CD14-positive monocyte (primary cell): ENCODE measurements at regions of chr13 and their contacts with region 1.

Region 1: GRCh38 chr13:98476538-98476966 is 100.4 kb downstream of the STK24 start:
- DNase-seq: peak; percentile 92 to 99 (median 97)
- H3K4me3 ChIP-seq: no peak overlapping the region
- H3K4me3 Mint-ChIP-seq: peak overlapping the region; percentile 56 to 60
- H3K27ac ChIP-seq: peak overlapping the region; percentile 8 to 72
- H3K27ac Mint-ChIP-seq: peak overlapping the region; percentile 39 to 92 (median 86)
- H3K4me1 ChIP-seq: peaks cover 20 to 23% of the 10 kb centered on the region in 2 donors
- H3K4me1 Mint-ChIP-seq: peaks cover 34% of the 10 kb centered on the region
- H3K27me3 ChIP-seq: no peaks in the 10 kb centered on the region
- H3K27me3 Mint-ChIP-seq: peaks cover 0 to 3% (median 1%) of the 10 kb centered on the region in 3 donors
- CTCF ChIP-seq: no peak

Region 2: DNA sequence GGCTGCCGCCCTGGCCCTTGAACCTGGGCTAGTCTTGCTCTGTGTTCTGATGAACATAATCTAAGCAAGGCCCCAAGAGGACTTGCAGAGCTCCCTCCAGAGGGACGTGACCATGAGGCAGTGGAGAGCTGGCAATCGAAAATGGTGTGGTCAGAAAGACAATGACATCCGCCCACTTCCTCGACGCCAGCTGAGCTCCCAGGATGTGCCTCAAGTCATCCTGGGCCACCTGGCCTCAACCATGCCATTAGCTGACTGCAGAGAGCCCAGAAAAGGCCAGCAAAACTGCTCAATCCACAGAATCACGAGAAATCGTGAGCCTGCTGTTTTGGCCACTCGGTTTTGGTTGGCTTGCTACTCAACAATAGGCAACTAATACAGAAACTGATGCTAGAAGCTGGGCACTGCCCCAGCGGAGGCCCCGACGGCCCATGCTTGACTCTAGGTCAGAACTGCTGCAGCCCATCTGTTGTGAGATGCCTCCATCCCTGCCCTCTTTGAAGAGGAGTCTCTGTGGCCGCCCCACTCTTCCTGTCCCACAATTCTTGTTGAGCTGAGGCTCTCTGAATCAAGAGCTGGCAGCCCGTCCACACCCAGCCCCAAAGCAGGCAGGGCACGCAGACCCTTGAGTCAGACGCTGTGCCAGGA is 47.0 kb after region 1 on chr13:
- intact Hi-C with region 1: loop called in 1 of 2 experiments (anchors 5 kb)
- DNase-seq: no peak
- H3K4me3 ChIP-seq: no peak overlapping the region
- H3K4me3 Mint-ChIP-seq: peak overlapping the region in 1 of 2 donors; percentile 12
- H3K27ac ChIP-seq: peak overlapping the region in 1 of 2 donors; percentile 41
- H3K27ac Mint-ChIP-seq: peak overlapping the region in 4 of 7 donors; percentile 6 to 80 (median 60)
- H3K4me1 ChIP-seq: peaks cover 8 to 16% of the 10 kb centered on the region in 2 donors
- H3K4me1 Mint-ChIP-seq: peaks cover 56% of the 10 kb centered on the region
- H3K27me3 ChIP-seq: no peaks in the 10 kb centered on the region
- H3K27me3 Mint-ChIP-seq: peaks cover 0 to 3% (median 0%) of the 10 kb centered on the region in 3 donors
- CTCF ChIP-seq: no peak

Region 3: DNA sequence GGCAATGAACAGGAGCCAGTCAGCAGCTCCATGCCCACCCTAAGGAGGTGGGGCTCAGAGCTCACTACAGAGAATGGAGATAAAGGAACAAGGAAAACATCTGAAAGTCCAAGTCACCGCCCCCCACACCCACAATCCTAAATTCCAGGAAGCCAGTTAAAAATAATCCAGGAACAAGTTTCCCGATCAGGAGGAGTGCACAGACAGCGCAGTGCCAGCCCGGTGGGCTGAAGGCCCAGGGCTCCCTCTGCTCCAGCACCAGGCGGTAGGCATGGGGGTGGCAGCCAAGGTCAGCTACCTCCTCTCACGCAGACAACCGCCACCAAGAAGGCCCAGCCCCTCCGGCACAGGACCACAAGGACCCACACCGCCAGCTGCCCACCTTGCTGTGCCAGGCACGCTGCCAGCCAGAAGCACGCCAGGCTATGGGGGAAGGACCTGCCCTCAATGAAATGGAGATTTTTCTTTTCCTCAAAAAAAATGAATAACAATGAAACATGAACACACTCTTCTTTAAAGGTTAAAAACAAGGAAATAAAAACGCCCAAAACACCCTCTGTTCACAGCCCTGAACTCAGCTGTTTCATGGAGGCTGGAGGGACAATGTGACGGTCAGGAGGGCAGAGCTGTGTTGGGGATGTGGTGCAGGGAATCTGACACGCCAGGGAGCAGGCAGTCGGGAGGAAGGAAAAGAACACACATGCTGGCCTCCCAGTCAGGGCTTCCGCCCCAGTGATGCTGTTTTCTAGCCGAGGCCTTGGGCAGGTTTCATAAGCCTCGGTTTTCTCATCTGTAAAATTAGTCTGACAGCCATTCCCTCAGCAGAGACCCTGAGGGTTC is 89.4 kb after region 1 on chr13:
- intact Hi-C with region 1: loop called (anchors 2 to 10 kb)
- DNase-seq: no peak
- H3K4me3 ChIP-seq: no peak overlapping the region
- H3K4me3 Mint-ChIP-seq: peak overlapping the region; percentile 24 to 49
- H3K27ac ChIP-seq: peak overlapping the region; percentile 20 to 35
- H3K27ac Mint-ChIP-seq: peak overlapping the region; percentile 40 to 86 (median 71)
- H3K4me1 ChIP-seq: peaks cover 61 to 76% of the 10 kb centered on the region in 2 donors
- H3K4me1 Mint-ChIP-seq: peaks cover 83% of the 10 kb centered on the region
- H3K27me3 ChIP-seq: no peaks in the 10 kb centered on the region
- H3K27me3 Mint-ChIP-seq: peaks cover 0 to 2% (median 0%) of the 10 kb centered on the region in 3 donors
- CTCF ChIP-seq: no peak

Region 4: DNA sequence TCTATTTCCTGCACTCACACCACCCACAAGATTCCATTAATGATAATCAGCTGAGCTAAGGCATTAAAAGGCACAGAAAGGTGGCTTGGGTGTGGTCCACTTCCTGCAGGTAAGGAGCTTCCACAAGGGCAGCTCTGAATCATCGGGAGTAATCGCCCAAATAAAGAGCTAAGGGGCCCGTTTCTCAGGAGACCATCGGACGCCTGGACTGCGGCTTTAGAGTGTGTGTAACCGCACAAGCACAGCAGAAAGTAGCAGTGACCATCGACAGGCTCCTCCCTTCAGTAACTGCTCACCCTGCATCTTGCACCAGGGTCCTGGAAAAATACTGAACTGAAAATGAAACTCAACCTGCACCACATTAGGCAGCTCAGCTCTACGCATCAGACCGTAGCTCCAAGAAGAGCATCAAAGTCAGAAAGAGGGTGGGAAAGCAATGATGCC is 94.4 kb after region 1 on chr13:
- intact Hi-C with region 1: loop called (anchors 2 to 10 kb)
- DNase-seq: peak; percentile 41 to 49 (median 46)
- H3K4me3 ChIP-seq: peak overlapping the region in 2 of 3 experiments; percentile 21 to 65
- H3K4me3 Mint-ChIP-seq: peak overlapping the region; percentile 71 to 80
- H3K27ac ChIP-seq: peak overlapping the region; percentile 47 to 89
- H3K27ac Mint-ChIP-seq: peak overlapping the region; percentile 41 to 95 (median 84)
- H3K4me1 ChIP-seq: peaks cover 62 to 80% of the 10 kb centered on the region in 2 donors
- H3K4me1 Mint-ChIP-seq: peaks cover 89% of the 10 kb centered on the region
- H3K27me3 ChIP-seq: no peaks in the 10 kb centered on the region
- H3K27me3 Mint-ChIP-seq: peaks cover 0 to 3% (median 0%) of the 10 kb centered on the region in 3 donors
- CTCF ChIP-seq: no peak